Left ventricle myocardium superior (tissue), 1 donor: ENCODE measurements at regions of chr1 and their contacts with region 1.

Region 1: GRCh38 chr1:35783055-35783583 is 13.3 kb upstream of the CLSPN start:
- DNase-seq: no peak
- ATAC-seq: no peak

Region 2: DNA sequence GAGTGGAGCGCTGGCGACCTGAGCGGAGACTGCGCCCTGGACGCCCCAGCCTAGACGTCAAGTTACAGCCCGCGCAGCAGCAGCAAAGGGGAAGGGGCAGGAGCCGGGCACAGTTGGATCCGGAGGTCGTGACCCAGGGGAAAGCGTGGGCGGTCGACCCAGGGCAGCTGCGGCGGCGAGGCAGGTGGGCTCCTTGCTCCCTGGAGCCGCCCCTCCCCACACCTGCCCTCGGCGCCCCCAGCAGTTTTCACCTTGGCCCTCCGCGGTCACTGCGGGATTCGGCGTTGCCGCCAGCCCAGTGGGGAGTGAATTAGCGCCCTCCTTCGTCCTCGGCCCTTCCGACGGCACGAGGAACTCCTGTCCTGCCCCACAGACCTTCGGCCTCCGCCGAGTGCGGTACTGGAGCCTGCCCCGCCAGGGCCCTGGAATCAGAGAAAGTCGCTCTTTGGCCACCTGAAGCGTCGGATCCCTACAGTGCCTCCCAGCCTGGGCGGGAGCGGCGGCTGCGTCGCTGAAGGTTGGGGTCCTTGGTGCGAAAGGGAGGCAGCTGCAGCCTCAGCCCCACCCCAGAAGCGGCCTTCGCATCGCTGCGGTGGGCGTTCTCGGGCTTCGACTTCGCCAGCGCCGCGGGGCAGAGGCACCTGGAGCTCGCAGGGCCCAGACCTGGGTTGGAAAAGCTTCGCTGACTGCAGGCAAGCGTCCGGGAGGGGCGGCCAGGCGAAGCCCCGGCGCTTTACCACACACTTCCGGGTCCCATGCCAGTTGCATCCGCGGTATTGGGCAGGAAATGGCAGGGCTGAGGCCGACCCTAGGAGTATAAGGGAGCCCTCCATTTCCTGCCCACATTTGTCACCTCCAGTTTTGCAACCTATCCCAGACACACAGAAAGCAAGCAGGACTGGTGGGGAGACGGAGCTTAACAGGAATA is 205.8 kb before region 1 on chr1:
- intact Hi-C with region 1: loop called (anchors 5 kb)
- DNase-seq: peak; percentile 60
- ATAC-seq: peak; percentile 68